Right ventricle myocardium inferior (tissue), 1 donor: ENCODE measurements at regions of chr3 and their contacts with region 1.

Region 1: DNA sequence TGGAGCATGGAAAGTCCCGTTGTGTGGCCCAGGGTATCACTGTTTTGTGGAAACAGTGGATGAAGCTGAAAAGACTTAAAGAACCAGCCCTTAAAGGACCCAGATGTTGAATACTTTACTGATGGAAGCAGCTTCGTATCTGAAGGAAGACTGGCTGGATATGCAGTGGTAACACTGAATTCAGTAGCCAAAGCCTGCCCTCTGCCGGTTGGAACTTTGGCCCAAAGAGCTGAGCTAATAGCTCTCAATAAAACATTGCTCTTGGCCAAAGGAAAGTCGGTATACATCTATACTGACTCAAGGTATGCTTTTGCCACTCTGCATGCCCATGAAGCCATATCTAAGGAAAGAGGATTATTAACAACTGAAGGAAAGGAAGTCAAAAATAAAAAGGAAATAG is 885.4 kb downstream of the PDCD6IP start:
- DNase-seq: peak; percentile 74
- ATAC-seq: peak; percentile 64

Region 2: GRCh38 chr3:33883538-33883950 is 800.3 kb before region 1 on chr3:
- intact Hi-C with region 1: loop called (anchors 1 kb)
- DNase-seq: no peak
- ATAC-seq: no peak

Region 3: GRCh38 chr3:33915791-33916546 is 767.9 kb before region 1 on chr3:
- intact Hi-C with region 1: loop called (anchors 1 kb)
- DNase-seq: no peak
- ATAC-seq: peak; percentile 60

Region 4: DNA sequence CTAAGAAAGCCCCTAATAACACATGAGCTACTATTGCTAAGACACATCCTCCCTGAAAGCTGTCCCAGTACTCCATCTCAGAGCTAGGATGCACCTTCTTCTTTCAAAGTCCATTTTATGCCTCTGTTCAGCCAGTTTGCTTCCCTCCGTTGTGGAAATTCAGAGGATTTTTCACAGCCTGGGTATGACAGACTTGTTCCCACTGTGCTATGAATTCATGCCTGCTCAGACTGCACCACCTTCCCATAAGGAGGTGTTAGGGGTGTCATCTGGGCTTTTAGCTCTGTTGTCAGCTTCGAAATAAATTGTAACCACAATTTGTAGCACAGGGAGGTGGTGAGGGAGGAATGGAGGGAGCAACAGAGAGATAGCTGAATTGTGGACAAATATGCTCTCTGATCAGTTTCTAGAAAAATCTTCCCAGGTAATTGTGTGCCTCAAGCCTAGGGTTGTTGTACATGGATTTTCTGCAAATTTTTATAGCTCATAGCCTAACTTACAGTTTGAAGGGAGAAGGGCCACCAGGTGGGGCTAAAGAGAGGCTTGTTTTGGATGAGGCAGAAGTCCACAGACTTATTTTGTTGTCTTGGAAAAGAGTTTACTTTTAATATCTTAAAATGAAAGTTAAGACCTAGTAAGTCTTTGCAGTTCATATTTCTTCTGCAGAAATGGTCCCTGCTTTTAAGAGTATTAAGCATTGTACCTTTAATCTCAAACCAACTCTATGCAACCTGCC is 423.4 kb before region 1 on chr3:
- intact Hi-C with region 1: loop called (anchors 2 kb)
- DNase-seq: no peak
- ATAC-seq: no peak

Region 5: GRCh38 chr3:34405159-34405558 is 278.7 kb before region 1 on chr3:
- intact Hi-C with region 1: no loop called
- DNase-seq: no peak
- ATAC-seq: no peak